Posterior vena cava (tissue), 2 donors: ENCODE measurements at regions of chr2 and their contacts with region 1.

Region 1: DNA sequence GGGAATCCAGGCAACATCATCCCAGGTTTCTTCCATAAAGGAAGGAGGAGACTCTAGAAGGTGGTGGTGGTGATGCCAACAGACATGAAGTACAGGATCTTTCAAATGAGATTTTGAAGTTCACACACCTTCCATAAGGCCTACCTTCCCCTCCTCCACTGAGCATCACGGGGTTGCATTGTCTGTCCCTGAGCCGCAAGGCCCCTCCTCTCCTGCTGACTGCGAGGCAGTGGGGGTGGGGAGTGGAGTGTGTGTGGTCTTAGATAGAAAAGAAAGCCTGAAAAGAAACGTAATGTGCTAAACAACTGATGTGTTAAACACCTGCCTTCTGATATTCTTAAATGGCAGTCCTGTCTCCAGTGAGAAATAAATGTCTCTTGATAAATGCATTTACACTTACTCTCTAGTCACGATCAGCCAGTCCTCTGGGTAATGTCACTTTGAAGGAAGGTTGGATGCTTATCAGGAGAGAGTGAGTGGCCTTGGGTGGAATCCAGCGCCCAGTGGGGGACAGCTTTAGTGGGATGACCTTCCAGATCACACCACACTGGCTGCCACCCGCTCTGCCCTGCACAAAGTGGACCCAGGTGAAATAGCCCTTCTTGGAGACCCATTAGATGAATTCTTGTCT is 5.5 kb upstream of the SCYGR5 start:
- DNase-seq: no peak

Region 2: GRCh38 chr2:226057914-226058313 is 1603.2 kb before region 1 on chr2:
- intact Hi-C with region 1: loop called in 1 of 2 experiments (anchors 5 kb)
- DNase-seq: no peak

Region 3: GRCh38 chr2:227766373-227766883 is 105.3 kb after region 1 on chr2:
- intact Hi-C with region 1: loop called (anchors 5 to 10 kb)
- DNase-seq: peak; percentile 92

Region 4: GRCh38 chr2:227774011-227774624 is 113.0 kb after region 1 on chr2:
- intact Hi-C with region 1: loop called (anchors 5 to 10 kb)
- DNase-seq: no peak